ENCODE measurements at regions of chr11 and their contacts with region 1.

Region 1: GRCh38 chr11:615504-616319 is at the start of gene IRF7:
- DNase-seq: peak; percentile 93
- ATAC-seq: peak; percentile 81
- H3K4me3 Mint-ChIP-seq: peak within 1 kb of the TSS; percentile 85
- H3K27ac Mint-ChIP-seq: peak within 1 kb of the TSS; percentile 95
- H3K4me1 Mint-ChIP-seq: peaks cover 13% of the 10 kb centered on the region
- H3K27me3 Mint-ChIP-seq: no peaks in the 10 kb centered on the region
- total RNA-seq, gene IRF7: 57.1 to 62.6 TPM

Region 2: GRCh38 chr11:406978-407739 is 208.6 kb before region 1 on chr11:
- CTCF ChIA-PET with region 1: no interaction called
- POLR2A ChIA-PET with region 1: no interaction called
- intact Hi-C with region 1: loop called in 1 of 2 experiments (anchors 1 kb)
- DNase-seq: peak; percentile 93
- ATAC-seq: peak; percentile 90
- H3K4me3 Mint-ChIP-seq: no peak overlapping the region
- H3K27ac Mint-ChIP-seq: no peak overlapping the region
- H3K4me1 Mint-ChIP-seq: peaks cover 5% of the 10 kb centered on the region
- H3K27me3 Mint-ChIP-seq: no peaks in the 10 kb centered on the region

Region 3: GRCh38 chr11:560305-561147 is 55.2 kb before region 1 on chr11 and contains the starts of genes LMNTD2 and RASSF7:
- CTCF ChIA-PET with region 1: no interaction called
- POLR2A ChIA-PET with region 1: no interaction called
- intact Hi-C with region 1: loop called in 1 of 2 experiments (anchors 1 kb)
- DNase-seq: peak; percentile 97
- ATAC-seq: peak; percentile 93
- H3K4me3 Mint-ChIP-seq: peak within 1 kb of the TSS; percentile 85
- H3K27ac Mint-ChIP-seq: peak within 1 kb of the TSS; percentile 72
- H3K4me1 Mint-ChIP-seq: peaks cover 8% of the 10 kb centered on the region
- H3K27me3 Mint-ChIP-seq: peaks cover 2% of the 10 kb centered on the region
- total RNA-seq, gene LMNTD2: 2.7 to 4.9 TPM
- total RNA-seq, gene RASSF7: 16.8 TPM

Region 4: DNA sequence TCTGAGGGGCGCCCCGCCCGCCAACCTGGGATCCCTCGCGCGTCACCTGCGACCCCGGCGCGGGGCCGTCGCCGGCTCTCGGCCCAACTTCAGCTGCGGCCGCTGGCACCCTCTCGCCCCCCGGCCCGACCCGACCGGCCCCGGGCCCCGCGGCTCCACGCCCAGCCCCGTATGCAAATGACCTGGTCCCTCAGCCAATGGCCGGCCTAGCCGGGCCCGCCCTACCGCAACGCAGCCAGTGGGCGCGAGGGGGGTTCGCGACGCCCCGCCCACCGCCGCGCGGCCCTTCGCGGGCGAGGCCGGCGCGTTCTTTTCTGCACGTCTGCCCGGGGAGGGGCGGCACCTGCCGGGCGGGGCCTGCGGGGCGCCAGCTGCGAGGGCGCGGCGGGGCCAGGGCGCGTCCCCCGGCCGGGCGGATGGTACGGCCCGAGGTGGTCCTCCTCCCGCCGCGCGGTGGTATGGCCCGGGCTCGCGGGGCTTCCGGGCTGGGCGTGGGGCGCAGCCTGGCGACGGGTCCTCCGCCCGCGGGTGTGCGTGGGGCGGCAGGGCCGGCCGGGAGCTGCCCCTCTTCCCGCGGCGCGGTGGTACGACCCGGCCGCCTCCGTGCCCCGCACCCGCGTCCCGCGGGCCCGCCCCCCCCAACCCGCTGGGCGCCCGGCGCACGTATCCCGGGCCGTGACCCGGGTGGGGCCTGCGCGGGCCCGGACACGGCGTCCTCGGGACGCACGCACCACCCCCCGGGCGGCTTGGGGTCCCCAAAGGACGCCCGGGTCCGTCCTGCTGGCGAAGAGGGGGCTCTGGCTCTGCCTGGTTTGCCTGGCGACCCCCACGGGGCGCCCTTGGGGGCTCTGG is 47.2 kb before region 1 on chr11:
- CTCF ChIA-PET with region 1: no interaction called
- POLR2A ChIA-PET with region 1: no interaction called
- intact Hi-C with region 1: loop called in 1 of 2 experiments (anchors 2 kb)
- DNase-seq: peak; percentile 97
- ATAC-seq: peak; percentile 93
- H3K4me3 Mint-ChIP-seq: peak overlapping the region; percentile 88
- H3K27ac Mint-ChIP-seq: peak overlapping the region; percentile 72
- H3K4me1 Mint-ChIP-seq: no peaks in the 10 kb centered on the region
- H3K27me3 Mint-ChIP-seq: no peaks in the 10 kb centered on the region

Region 5: GRCh38 chr11:737371-737770 is 121.7 kb after region 1 on chr11:
- CTCF ChIA-PET with region 1: no interaction called
- POLR2A ChIA-PET with region 1: no interaction called
- intact Hi-C with region 1: no loop called
- DNase-seq: no peak
- ATAC-seq: peak; percentile 63
- H3K4me3 Mint-ChIP-seq: peak overlapping the region; percentile 23
- H3K27ac Mint-ChIP-seq: peak overlapping the region; percentile 7
- H3K4me1 Mint-ChIP-seq: peaks cover 13% of the 10 kb centered on the region
- H3K27me3 Mint-ChIP-seq: no peaks in the 10 kb centered on the region

Measured in activated CD4-positive, alpha-beta T cell treated with anti-CD3 and anti-CD28 coated beads for 36 hours (primary cell).